ENCODE measurements at regions of chr6 and their contacts with region 1.

Region 1: GRCh38 chr6:34696739-34697543 is at the start of gene ILRUN:
- DNase-seq: peak; percentile 92 to 98 (median 96)
- H3K4me3 ChIP-seq: peak within 1 kb of the TSS; percentile 63 to 100 (median 95)
- H3K27ac ChIP-seq: peak within 1 kb of the TSS; percentile 63 to 98 (median 91)
- H3K27me3 ChIP-seq: no peaks in the 10 kb centered on the region
- CTCF ChIP-seq: peak in 5 of 56 donors; percentile 2 to 32 (median 6)
- total RNA-seq, gene ILRUN: 46.6 to 155 (median 106) TPM

Region 2: GRCh38 chr6:34656378-34657036 is 40.4 kb before region 1 on chr6:
- intact Hi-C with region 1: loop called in 1 of 2 experiments (anchors 5 kb)
- DNase-seq: no peak
- H3K4me3 ChIP-seq: peak overlapping the region in 57 of 59 donors; percentile 4 to 66 (median 49)
- H3K27ac ChIP-seq: peak overlapping the region; percentile 56 to 98 (median 89)
- H3K27me3 ChIP-seq: no peaks in the 10 kb centered on the region
- CTCF ChIP-seq: no peak

Region 3: DNA sequence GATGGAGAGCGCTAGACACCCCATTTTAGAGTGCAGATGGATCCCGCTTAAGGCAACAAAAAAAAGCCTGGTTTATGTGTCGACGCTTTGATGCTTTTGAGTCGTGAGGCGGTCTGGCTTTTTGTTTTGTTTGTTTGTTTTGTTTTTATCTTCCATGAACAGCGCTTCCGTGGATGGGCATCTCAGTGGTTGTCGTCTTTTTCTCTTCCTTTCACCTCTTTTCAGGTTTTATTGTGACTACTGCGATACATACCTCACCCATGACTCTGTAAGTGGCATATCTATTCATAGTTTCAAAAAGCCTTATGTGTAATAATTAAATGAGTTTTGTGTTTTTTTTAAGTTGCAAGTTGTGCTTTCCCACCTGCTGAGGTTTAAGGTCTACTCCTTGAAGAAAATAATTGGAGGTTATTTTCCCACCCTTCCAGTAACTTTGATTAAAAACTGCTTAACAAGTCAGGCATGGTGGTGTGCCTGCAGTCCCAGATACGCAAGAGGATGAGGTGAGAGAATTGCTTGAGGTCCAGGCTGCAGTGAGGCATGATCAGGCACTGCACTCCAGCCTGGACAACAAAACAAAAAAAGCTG is 60.8 kb after region 1 on chr6:
- intact Hi-C with region 1: loop called (anchors 1 to 2 kb)
- DNase-seq: no peak
- H3K4me3 ChIP-seq: peak overlapping the region; percentile 62 to 99 (median 84)
- H3K27ac ChIP-seq: peak overlapping the region in 57 of 59 donors; percentile 21 to 98 (median 94)
- H3K27me3 ChIP-seq: no peaks in the 10 kb centered on the region
- CTCF ChIP-seq: no peak